ENCODE measurements at regions of chr18 and their contacts with region 1.

Region 1: DNA sequence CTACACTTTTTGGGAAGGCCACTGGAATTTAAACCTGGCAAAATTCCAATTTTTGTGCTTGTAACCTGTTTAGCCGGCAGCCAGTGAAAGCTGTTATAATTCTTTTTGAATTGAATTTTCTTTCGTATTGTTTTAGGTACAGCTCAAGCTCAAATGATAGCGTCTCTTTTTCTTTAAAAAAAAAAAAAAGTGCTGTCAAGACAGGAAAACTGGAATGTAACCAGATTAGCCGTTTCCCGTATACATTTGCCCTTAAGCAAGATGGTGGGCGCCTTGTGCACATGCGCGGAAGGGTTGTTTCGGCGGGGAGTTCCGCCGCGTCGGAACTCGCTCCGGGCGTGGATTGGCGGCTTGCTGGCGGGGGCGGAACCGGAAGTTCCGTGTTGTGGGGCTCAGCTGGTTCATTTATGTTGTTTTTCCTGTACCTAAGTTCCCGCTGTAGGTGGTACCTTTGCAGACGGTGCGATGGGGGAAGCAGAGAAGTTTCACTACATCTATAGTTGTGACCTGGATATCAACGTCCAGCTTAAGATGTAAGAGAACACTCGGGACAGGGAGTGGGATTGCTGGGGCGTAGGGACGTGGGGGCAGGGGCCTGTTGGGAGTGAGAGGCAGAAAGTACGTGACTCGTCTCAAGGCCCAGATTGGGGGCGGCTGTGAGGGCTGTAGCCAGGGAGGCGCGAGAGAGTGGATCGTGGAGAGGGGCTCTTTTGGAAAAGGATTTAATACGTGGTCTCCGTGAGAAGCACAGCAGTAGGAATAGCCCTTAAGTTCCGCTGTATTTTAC is at the start of gene PIK3C3:
- DNase-seq: peak; percentile 93
- H3K4me3 Mint-ChIP-seq: peak within 1 kb of the TSS; percentile 100
- H3K27ac Mint-ChIP-seq: peak within 1 kb of the TSS; percentile 99
- H3K4me1 Mint-ChIP-seq: peaks cover 28% of the 10 kb centered on the region
- H3K27me3 Mint-ChIP-seq: peaks cover 2% of the 10 kb centered on the region
- total RNA-seq, gene PIK3C3: 53.5 and 55.3 TPM in 2 replicates

Region 2: DNA sequence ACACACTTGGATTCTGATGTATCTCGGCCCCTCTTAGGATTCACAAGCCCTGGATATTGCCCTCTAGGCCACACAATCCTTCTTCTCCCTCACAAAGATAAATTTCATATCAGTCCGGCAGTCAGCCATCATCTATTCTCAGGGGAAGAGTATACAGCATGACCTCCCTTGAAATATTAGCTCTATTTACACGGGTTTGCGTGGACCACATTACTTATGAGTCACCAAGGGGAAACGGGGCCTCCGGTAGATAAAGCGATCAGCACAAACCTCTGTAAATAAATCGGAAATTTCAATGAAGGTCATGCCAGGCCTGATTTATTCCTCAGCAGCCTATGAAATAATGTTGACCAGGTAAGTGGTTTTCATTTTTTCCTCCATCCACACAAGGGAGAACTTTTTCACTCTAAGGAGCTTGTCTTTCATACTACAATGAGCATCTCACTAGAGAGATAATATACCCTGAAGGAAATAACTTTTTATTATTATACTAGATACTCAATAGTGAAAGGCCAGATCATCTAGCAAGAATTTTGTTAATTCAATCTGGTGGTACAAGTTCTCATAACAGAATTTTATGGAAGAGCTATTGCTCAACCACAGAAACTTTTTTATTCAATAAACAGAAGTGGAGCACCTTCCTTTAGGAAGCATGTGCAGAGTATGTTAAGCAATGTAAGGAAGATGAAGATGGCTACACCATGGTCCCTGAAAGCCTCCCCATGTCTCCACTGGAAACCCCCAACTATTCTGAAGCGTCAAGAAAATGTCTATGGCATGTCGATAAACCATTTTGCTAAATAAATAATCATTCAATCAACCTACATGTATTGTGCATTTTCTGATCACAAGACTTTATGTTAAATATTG is 125.1 kb before region 1 on chr18:
- intact Hi-C with region 1: no loop called
- DNase-seq: no peak
- H3K4me3 Mint-ChIP-seq: no peak overlapping the region
- H3K27ac Mint-ChIP-seq: no peak overlapping the region
- H3K4me1 Mint-ChIP-seq: no peaks in the 10 kb centered on the region
- H3K27me3 Mint-ChIP-seq: no peaks in the 10 kb centered on the region

Region 3: DNA sequence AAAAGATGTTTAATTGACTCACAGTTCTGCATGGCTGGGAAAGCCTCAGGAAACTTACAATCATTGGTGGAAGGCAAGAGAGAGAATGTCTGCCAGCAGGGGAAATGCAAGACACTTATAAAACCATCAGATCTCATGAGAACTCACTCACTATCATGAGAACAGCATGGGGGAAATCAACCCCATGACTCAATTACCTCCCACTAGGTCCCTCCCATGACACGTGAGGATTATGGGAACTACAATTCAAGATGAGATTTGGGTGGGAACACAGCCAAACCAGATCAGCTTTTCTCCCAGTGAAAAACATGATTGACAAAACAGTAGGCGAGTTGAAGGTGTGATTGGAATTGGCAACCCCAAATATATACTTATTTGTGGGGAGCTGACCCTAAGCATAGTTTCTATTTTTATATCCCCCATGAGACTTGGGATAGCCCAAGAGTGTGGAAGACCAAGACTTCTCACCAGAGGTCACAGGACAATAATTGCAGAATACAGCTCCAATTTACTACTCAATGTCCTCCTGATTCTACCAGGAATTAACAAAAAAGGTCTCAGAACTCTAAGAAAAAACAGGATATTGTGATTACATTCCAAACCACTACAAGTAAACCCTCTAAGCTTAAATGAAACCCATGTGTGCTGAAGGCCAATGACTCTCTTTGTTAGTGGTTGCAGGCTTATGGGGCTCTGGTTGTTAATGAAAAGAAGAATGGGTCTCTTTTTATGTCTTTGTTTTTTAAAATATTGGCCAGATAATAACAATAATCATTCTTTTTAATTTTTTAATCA is 96.1 kb before region 1 on chr18:
- intact Hi-C with region 1: no loop called
- DNase-seq: no peak
- H3K4me3 Mint-ChIP-seq: no peak overlapping the region
- H3K27ac Mint-ChIP-seq: no peak overlapping the region
- H3K4me1 Mint-ChIP-seq: no peaks in the 10 kb centered on the region
- H3K27me3 Mint-ChIP-seq: peaks cover 2% of the 10 kb centered on the region

Region 4: DNA sequence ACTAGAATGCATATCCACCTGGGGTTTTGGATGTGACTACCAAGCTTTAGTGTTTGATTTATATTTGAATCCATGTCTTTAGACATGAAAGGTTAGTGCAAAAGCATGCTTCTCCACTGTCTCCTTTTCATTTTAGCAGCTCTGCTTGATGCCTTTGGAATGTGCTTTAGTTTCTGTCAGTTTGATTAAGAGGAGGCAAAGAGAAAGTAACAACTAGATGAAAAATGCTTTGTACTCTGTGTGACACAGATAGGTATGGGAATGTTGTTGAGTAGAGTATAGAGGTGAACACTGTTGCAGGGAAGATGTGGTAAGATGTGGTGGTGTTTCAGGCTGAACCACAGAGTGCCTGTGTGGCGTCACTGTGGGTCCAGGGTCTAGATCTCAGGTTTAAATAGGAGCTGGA is 19.8 kb after region 1 on chr18:
- intact Hi-C with region 1: loop called (anchors 1 kb)
- DNase-seq: no peak
- H3K4me3 Mint-ChIP-seq: no peak overlapping the region
- H3K27ac Mint-ChIP-seq: no peak overlapping the region
- H3K4me1 Mint-ChIP-seq: peaks cover 26% of the 10 kb centered on the region
- H3K27me3 Mint-ChIP-seq: no peaks in the 10 kb centered on the region

Region 5: GRCh38 chr18:41982942-41983660 is 28.1 kb after region 1 on chr18:
- intact Hi-C with region 1: loop called (anchors 2 kb)
- DNase-seq: no peak
- H3K4me3 Mint-ChIP-seq: no peak overlapping the region
- H3K27ac Mint-ChIP-seq: peak overlapping the region; percentile 90
- H3K4me1 Mint-ChIP-seq: peaks cover 23% of the 10 kb centered on the region
- H3K27me3 Mint-ChIP-seq: no peaks in the 10 kb centered on the region

Region 6: DNA sequence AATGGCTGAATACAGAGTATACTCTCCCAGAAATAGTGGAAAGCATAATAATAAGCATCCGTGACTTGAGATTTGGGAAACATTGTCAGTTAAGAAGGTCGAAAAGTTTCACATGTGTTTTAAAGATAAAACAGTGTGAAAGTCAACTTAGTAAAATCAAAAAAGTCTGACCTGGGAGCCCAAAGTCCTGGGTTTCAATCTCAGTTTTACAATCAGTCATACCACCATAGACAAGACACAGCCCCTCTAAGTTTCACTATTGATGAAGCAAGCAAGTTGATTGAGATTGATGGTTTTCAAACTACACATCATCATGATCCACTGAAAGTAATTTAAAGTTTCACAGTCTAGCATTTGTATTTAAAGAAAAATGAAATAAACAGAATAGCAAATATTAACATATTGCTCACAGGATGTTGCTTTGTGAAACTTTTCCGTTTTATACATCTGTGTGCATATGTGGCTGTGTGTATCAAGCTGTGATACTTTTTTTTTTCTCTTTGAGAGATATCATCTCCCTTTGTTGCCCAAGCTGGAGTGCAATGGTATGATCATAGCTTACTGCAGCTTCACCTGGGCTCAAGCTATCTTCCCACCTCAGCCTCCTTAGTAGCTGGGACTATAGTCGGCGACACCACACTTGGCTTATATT is 71.1 kb after region 1 on chr18:
- intact Hi-C with region 1: loop called (anchors 2 kb)
- DNase-seq: no peak
- H3K4me3 Mint-ChIP-seq: no peak overlapping the region
- H3K27ac Mint-ChIP-seq: no peak overlapping the region
- H3K4me1 Mint-ChIP-seq: peaks cover 29% of the 10 kb centered on the region
- H3K27me3 Mint-ChIP-seq: no peaks in the 10 kb centered on the region